ENCODE measurements at regions of chr7 and their contacts with region 1.

Region 1: GRCh38 chr7:39623018-39623731 is at the start of gene RALA:
- DNase-seq: peak; percentile 96
- ATAC-seq: peak; percentile 98
- total RNA-seq, gene RALA: 38.0 TPM

Region 2: DNA sequence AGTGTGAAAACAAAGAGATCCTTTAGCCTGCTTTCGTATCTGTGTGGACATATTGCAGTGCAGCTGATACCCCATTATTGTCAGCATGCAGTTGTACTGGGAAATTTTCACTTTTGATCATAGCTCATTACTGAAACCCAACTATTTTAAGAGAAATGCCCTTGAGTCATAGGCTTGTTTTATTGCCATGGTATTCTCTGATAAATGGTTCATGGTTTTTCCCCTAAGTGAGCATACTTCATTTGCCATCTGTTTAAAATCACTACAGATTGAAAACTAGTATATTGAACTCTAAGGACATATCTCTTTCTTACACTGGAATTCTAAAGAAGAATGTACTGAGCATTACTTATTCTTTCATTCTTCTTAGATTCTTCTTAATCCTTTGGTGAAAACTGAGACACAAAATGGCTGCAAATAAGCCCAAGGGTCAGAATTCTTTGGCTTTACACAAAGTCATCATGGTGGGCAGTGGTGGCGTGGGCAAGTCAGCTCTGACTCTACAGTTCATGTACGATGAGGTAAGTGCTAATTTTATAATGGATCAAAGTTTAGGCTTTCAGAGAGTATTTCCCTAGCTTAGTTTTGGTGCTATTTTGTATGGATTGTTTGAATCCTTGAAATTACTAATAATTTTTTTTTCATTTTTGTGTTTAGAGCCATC is 63.2 kb after region 1 on chr7:
- intact Hi-C with region 1: loop called (anchors 10 kb)
- DNase-seq: no peak
- ATAC-seq: no peak

Region 3: GRCh38 chr7:39732837-39733804 is 109.9 kb after region 1 on chr7:
- intact Hi-C with region 1: loop called (anchors 5 kb)
- DNase-seq: peak; percentile 97
- ATAC-seq: peak; percentile 98

Region 4: DNA sequence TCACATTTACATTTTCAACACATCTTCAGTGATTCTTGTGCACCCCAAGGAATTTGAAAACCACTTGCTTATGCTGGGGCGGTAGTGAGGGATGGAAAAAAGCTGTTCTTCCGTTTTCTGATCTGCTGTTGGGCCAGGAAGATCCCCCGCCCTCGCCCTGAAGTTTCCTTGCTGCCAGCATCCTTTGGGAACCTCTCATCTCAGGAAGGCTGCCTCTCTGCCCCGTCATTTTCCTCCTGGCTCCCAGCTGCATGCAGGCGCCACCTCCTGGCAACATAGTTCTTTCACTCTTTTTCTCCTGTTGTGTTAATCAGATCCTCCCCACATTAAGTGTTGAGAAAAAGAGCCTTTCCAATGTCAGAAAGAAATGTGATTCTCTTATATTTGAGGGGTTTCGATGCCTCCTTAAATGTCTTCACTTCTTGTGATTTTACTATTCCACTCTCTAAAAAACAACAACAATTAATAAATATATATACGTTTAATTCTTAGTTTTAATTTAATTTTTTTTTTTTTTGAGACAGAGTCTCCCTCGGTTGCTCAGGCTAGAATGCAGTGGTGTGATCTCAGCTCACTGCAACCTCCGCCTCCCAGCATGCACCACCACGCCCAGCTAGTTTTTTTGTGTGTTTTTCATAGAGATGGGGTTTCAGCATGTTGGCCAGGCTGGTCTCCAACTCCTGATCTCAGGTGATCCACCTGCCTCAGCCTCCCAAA is 123.1 kb after region 1 on chr7:
- intact Hi-C with region 1: loop called (anchors 5 kb)
- DNase-seq: peak; percentile 78
- ATAC-seq: peak; percentile 86

Measured in Right ventricle myocardium superior (tissue), 1 donor.